ENCODE measurements at regions of chr7 and their contacts with region 1.

Region 1: GRCh38 chr7:3244241-3244814 is 56.7 kb upstream of the SDK1 start:
- DNase-seq: peak; percentile 58
- H3K4me3 Mint-ChIP-seq: peak overlapping the region; percentile 34
- H3K27ac Mint-ChIP-seq: peak overlapping the region; percentile 2
- H3K4me1 Mint-ChIP-seq: peaks cover 33% of the 10 kb centered on the region
- H3K27me3 Mint-ChIP-seq: no peaks in the 10 kb centered on the region
- CTCF ChIP-seq: no peak

Region 2: GRCh38 chr7:3218411-3219225 is 25.7 kb before region 1 on chr7:
- CTCF ChIA-PET with region 1: no interaction called
- intact Hi-C with region 1: loop called (anchors 2 kb)
- DNase-seq: no peak
- H3K4me3 Mint-ChIP-seq: no peak overlapping the region
- H3K27ac Mint-ChIP-seq: no peak overlapping the region
- H3K4me1 Mint-ChIP-seq: peaks cover 52% of the 10 kb centered on the region
- H3K27me3 Mint-ChIP-seq: no peaks in the 10 kb centered on the region
- CTCF ChIP-seq: no peak

Region 3: DNA sequence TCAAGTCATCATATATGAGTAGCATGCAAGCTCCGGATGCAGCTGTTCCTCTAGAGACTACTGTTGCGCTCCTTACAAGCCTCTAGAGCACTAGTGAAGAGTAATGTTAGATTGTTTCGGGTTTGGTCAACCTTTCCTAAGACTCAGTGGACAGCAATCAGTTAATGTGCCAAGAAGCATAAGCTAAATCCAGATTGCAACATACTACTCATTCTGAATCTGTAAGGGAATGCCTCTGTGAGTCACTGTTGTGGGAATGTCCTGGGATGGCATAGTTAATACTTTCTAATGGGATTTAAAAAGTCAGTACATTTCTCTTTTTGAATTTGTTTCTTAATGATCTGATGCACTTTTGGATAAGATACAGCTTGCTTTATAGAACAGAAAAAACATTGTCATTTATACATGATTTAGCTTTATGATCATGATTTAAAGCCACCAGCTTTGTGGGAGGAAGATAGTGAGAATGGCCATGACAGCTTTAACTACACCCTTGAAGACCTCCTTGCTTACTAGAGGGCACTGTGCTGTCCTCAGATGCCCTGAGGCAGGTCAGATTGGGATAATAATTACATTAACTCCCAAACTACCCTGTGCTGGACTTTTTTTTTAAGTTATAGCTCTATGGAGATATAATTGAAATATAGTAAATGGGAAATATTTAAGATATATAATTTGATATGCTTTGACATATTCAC is 195.2 kb after region 1 on chr7:
- CTCF ChIA-PET with region 1: no interaction called
- intact Hi-C with region 1: no loop called
- DNase-seq: peak; percentile 40
- H3K4me3 Mint-ChIP-seq: peak overlapping the region; percentile 25
- H3K27ac Mint-ChIP-seq: peak overlapping the region; percentile 54
- H3K4me1 Mint-ChIP-seq: peaks cover 53% of the 10 kb centered on the region
- H3K27me3 Mint-ChIP-seq: no peaks in the 10 kb centered on the region
- CTCF ChIP-seq: no peak

Measured in Calu3 (cell line).